ENCODE measurements at regions of chr9 and their contacts with region 1.

Region 1: DNA sequence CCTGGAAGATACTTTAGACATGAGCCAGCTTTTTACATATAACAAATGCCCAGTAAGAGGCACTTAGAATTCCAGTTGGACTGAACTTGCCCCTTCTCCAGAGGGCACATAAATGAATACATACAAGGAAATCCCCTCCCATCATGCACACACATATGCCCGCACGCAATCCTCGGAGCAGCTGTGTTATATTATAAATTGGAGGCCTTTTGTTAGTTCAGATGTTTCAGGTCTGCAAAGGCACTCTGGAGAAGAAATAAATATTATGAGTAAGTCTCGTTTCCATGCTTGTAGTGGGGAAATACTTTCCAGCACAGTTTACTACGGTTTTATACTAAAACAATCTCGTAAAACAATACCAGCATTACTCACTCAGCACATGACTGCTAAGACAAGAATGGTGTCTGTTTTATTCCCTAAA is 17.6 kb upstream of the MUSK start:
- DNase-seq: peak in 1 of 5 donors; percentile 20
- H3K4me3 ChIP-seq: no peak overlapping the region
- H3K27ac ChIP-seq: no peak overlapping the region
- H3K4me1 ChIP-seq: peaks cover 3% of the 10 kb centered on the region
- H3K27me3 ChIP-seq: no peaks in the 10 kb centered on the region
- CTCF ChIP-seq: no peak
- EP300 ChIP-seq: no peak
- POLR2A ChIP-seq: no peak

Region 2: DNA sequence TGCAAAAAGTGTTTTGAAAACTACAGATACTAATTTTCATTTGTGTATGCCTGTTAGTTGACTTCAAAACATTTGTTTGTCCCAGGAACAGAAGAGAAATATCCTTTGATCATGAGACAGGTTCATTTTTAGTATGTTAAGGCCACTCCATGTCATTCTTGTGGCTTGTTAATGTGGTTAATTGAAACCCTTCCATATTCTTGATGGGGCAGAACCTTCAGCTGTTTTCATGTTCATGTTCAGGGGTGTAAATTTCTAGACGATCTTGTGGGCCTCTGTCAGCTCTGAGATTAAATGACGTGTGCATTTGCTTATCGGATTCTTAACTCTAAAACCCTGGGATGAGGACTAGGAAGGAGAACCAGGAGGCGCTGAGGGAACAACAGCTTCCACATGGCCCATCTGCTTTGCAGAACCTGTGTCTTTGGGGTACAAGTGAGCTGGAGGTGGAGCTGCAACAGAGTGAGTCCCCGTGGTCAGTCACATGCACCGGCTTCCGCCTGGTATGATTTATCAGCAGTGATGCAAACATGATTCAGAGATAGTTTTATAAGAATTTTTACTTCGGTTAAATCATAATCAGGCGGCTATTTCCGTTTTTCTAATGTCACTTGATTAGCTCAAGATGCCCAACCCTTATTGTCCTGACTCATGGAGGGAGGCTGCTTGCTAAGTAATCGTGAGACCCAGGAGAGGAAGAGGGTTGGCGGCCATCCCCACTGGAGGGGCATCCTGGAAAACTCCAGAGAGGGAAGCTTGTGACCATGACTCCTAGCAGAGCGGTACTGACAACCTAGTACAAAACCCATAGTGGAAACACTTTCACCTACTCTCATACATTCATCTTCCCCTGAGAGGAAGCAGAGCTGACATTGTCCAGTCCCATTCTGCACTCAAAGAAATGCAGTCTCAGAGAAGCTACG is 581.4 kb before region 1 on chr9:
- intact Hi-C with region 1: no loop called
- DNase-seq: no peak
- H3K4me3 ChIP-seq: no peak overlapping the region
- H3K27ac ChIP-seq: no peak overlapping the region
- H3K4me1 ChIP-seq: peaks cover 7% of the 10 kb centered on the region
- H3K27me3 ChIP-seq: no peaks in the 10 kb centered on the region
- CTCF ChIP-seq: no peak
- EP300 ChIP-seq: no peak
- POLR2A ChIP-seq: no peak

Region 3: GRCh38 chr9:111037381-111038305 is 386.6 kb after region 1 on chr9:
- intact Hi-C with region 1: loop called in 2 of 4 experiments (anchors 10 kb)
- DNase-seq: peak; percentile 39 to 69 (median 49)
- H3K4me3 ChIP-seq: peak overlapping the region; percentile 57
- H3K27ac ChIP-seq: peak overlapping the region; percentile 74 to 89
- H3K4me1 ChIP-seq: peaks cover 8% of the 10 kb centered on the region
- H3K27me3 ChIP-seq: no peaks in the 10 kb centered on the region
- CTCF ChIP-seq: no peak
- EP300 ChIP-seq: no peak
- POLR2A ChIP-seq: no peak

Region 4: DNA sequence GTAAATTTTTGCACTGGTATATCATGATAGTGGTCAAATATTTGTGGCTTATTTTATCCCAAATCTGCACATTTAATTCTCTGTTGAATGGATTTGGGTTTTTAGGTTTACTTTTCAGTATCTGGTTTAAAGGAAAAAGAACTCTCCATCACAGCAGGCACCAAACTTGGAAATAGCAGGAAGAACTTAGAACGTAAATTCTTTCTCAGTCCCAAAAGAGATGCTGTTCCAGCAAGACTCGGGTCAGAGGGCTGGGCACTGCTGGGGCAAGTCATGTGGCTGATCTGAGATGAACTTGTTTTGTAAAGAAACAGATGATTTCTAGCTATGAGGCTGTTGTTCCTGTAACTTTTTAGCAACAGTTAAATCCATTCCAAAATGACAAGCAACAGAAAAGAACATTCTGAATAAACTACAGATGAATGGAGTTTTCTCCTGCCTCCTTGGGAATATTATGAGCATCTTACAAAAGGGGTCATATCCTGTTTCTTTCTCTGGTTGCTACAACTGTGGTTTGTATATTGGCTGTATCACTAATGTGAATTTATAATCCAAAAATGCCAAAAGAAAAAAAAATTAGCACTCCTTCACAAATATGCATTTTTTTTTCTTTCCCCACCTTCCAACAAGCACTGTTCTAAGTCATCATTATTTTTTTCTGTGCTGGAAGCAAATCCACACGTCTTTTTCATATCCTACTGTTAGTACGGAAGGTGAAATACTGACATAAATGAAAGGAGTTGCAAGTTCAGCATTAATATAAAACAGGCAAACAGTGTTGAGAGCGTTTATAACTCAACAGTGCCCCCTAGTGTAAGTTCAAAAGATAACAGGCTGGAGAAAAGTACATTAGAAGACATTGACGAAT is 648.0 kb after region 1 on chr9:
- intact Hi-C with region 1: loop called in 1 of 4 experiments (anchors 5 kb)
- DNase-seq: peak in 2 of 5 donors; percentile 19 to 45
- H3K4me3 ChIP-seq: no peak overlapping the region
- H3K27ac ChIP-seq: no peak overlapping the region
- H3K4me1 ChIP-seq: no peaks in the 10 kb centered on the region
- H3K27me3 ChIP-seq: no peaks in the 10 kb centered on the region
- CTCF ChIP-seq: peak; percentile 70 to 92 (median 82)
- EP300 ChIP-seq: no peak
- POLR2A ChIP-seq: no peak

Region 5: DNA sequence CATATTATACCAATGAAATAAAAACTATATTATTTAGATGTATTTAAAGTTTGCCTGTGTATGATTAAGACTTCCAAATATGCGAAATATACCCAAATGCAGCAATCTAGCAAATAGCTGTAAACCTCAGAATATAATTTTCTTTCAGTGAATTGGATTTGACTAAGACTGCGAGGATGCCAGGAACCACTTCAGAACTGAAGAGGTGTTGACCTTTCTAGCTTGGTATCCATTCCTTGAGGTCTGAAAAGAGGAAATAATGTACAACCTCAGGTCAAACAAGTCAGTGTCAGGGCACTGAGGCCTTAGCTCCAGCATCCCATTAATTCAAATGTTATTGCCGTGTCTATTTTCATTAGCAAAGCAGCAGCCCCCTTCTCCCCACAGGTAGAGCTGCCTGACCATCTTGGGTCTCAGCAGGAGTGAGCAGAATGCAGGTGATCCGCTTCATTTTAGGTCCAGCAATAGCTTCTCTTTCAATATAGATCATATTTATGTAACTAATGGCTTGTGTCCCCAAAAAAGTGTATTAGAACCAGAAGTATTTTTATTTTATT is 1935.7 kb after region 1 on chr9:
- intact Hi-C with region 1: loop called in 1 of 4 experiments (anchors 10 kb)
- DNase-seq: no peak
- H3K4me3 ChIP-seq: no peak overlapping the region
- H3K27ac ChIP-seq: no peak overlapping the region
- H3K4me1 ChIP-seq: peaks cover 2% of the 10 kb centered on the region
- H3K27me3 ChIP-seq: no peaks in the 10 kb centered on the region
- CTCF ChIP-seq: no peak
- EP300 ChIP-seq: no peak
- POLR2A ChIP-seq: no peak